GM18951 (cell line): ENCODE measurements at regions of chr1 and their contacts with region 1.

Region 1: GRCh38 chr1:94061513-94062443 is 59.2 kb downstream of the ABCA4 start:
- POLR2A ChIP-seq: no peak

Region 2: DNA sequence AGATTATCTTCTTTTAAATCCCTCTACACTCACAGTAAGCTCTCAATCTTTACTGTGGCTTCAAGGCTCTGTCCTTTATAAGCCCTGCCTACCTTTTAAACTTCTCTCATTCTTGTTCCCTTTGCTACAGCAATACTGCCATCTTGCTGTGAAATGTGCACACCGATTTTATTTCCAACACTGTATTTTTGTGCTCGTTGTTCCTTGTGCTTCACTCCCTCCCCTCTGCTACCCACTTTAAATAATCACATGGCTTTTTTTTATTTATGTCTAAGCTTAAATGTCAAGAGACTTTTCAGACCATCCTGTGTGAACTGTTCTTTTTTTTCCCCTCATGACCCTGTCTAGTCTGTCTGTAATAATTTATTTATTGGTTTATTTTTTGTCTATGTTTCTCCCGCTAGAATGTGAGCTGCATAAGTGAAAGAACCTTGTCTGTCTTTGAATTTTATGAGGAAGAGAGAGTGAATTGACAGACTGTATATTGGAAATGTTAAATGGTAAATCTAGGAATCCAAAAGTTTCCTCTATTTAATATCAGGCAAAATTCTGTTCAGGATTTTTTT is 402.1 kb after region 1 on chr1:
- in situ Hi-C with region 1: loop called (anchors 25 kb)
- POLR2A ChIP-seq: no peak

Region 3: DNA sequence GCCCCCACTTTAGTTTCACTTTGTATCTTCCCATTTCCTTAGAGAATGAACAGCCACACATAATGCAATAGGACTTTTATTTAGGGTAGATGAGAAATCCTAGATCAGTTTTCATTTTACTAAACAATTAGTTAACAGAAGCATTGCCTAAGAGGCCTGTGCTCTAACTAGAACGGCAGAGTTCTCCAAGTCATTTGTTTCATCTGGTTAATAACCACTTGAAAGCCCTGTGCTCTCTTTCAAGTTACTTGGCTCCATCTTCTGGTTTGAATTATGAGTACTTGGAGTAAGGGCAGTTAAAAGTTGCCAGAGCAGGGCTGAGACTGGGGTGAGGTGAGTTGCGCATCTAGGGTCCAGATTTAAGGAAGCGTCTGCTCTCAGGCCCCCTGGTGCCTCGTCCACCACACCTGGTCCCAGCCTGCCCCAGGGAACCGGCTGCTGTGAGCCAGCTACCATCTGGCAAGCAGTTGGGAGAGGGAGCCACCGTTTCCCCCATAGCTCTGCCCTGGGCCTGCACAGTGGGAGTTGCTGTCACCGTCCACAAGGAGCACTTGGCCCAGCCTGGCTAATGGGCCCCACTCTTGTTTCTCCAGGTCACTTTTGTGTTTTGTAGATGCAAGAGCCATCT is 740.3 kb after region 1 on chr1:
- in situ Hi-C with region 1: loop called (anchors 25 kb)
- POLR2A ChIP-seq: no peak

Region 4: GRCh38 chr1:95043141-95043980 is 981.6 kb after region 1 on chr1:
- in situ Hi-C with region 1: loop called (anchors 25 kb)
- POLR2A ChIP-seq: no peak